ENCODE measurements at regions of chr1 and their contacts with region 1.

Region 1: GRCh38 chr1:17494114-17494729 is 45.3 kb upstream of the ARHGEF10L start:
- DNase-seq: peak; percentile 84
- H3K4me3 Mint-ChIP-seq: no peak overlapping the region
- H3K27ac Mint-ChIP-seq: no peak overlapping the region
- H3K4me1 Mint-ChIP-seq: no peaks in the 10 kb centered on the region
- H3K27me3 Mint-ChIP-seq: no peaks in the 10 kb centered on the region
- CTCF ChIP-seq: peak; percentile 92

Region 2: DNA sequence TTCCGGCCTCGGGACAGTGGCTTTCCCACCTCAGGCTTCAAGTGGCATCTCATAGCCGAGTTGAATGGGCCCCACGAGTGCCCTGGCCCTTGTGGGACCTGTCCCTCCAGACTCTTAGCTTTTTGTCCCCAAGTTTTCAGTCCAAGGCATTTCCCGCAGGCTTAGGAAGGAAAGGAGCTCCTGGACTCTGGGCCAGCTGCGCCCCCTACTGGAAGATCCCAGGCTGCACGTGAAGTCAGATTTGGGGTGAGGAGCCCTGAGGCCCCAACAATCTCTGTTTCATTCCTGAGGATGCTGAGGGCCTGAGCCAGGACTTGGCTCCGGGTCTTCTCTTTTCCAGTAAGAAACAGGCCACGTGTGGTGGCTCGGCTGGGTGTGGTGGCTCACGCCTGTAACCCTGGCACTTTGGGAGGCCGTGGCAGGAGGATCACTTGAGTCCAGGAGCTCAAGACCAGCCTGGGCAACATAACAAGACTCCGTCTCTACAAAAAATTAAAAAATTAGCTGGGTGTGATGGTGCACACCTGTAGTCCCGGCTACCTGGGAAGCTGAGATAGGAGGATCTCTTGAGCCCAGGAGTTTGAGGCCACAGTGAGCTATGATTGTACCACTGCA is 112.7 kb after region 1 on chr1:
- CTCF ChIA-PET with region 1: interaction called, 10 read pairs
- intact Hi-C with region 1: loop called (anchors 2 kb)
- DNase-seq: peak; percentile 69
- H3K4me3 Mint-ChIP-seq: no peak overlapping the region
- H3K27ac Mint-ChIP-seq: no peak overlapping the region
- H3K4me1 Mint-ChIP-seq: peaks cover 7% of the 10 kb centered on the region
- H3K27me3 Mint-ChIP-seq: no peaks in the 10 kb centered on the region
- CTCF ChIP-seq: peak; percentile 74

Region 3: GRCh38 chr1:17742583-17742982 is 248.4 kb after region 1 on chr1:
- CTCF ChIA-PET with region 1: interaction called, 6 read pairs
- intact Hi-C with region 1: loop called (anchors 10 kb)
- DNase-seq: no peak
- H3K4me3 Mint-ChIP-seq: no peak overlapping the region
- H3K27ac Mint-ChIP-seq: no peak overlapping the region
- H3K4me1 Mint-ChIP-seq: no peaks in the 10 kb centered on the region
- H3K27me3 Mint-ChIP-seq: peaks cover 48% of the 10 kb centered on the region
- CTCF ChIP-seq: no peak

Region 4: GRCh38 chr1:18100491-18101063 is 606.4 kb after region 1 on chr1:
- CTCF ChIA-PET with region 1: no interaction called
- intact Hi-C with region 1: loop called (anchors 10 kb)
- DNase-seq: peak; percentile 42
- H3K4me3 Mint-ChIP-seq: no peak overlapping the region
- H3K27ac Mint-ChIP-seq: no peak overlapping the region
- H3K4me1 Mint-ChIP-seq: no peaks in the 10 kb centered on the region
- H3K27me3 Mint-ChIP-seq: peaks cover 88% of the 10 kb centered on the region
- CTCF ChIP-seq: peak; percentile 40